Activated CD8-positive, alpha-beta T cell treated with anti-CD3 and anti-CD28 coated beads, Interleukin-2, amount 10 ng/mL, durations not matched to agents 7 days and 5 days (primary cell): ENCODE measurements at regions of chr2 and their contacts with region 1.

Region 1: GRCh38 chr2:178914259-178914849 is 107.1 kb upstream of the TTN start:
- DNase-seq: peak; percentile 86
- ATAC-seq: peak; percentile 78
- H3K4me3 Mint-ChIP-seq: no peak overlapping the region
- H3K27ac Mint-ChIP-seq: peak overlapping the region; percentile 62
- H3K4me1 Mint-ChIP-seq: peaks cover 20% of the 10 kb centered on the region
- H3K27me3 Mint-ChIP-seq: no peaks in the 10 kb centered on the region

Region 2: GRCh38 chr2:178796079-178796677 is 118.2 kb before region 1 on chr2:
- CTCF ChIA-PET with region 1: interaction called, 16 read pairs
- POLR2A ChIA-PET with region 1: no interaction called
- DNase-seq: no peak
- ATAC-seq: no peak
- H3K4me3 Mint-ChIP-seq: no peak overlapping the region
- H3K27ac Mint-ChIP-seq: no peak overlapping the region
- H3K4me1 Mint-ChIP-seq: no peaks in the 10 kb centered on the region
- H3K27me3 Mint-ChIP-seq: no peaks in the 10 kb centered on the region

Region 3: GRCh38 chr2:178829299-178829960 is 84.9 kb before region 1 on chr2:
- CTCF ChIA-PET with region 1: no interaction called
- POLR2A ChIA-PET with region 1: no interaction called
- DNase-seq: no peak
- ATAC-seq: peak; percentile 58
- H3K4me3 Mint-ChIP-seq: no peak overlapping the region
- H3K27ac Mint-ChIP-seq: no peak overlapping the region
- H3K4me1 Mint-ChIP-seq: peaks cover 17% of the 10 kb centered on the region
- H3K27me3 Mint-ChIP-seq: no peaks in the 10 kb centered on the region

Region 4: GRCh38 chr2:178891265-178891958 is 22.9 kb before region 1 on chr2:
- CTCF ChIA-PET with region 1: interaction called, 10 read pairs
- POLR2A ChIA-PET with region 1: no interaction called
- DNase-seq: peak; percentile 81
- ATAC-seq: peak; percentile 85
- H3K4me3 Mint-ChIP-seq: no peak overlapping the region
- H3K27ac Mint-ChIP-seq: no peak overlapping the region
- H3K4me1 Mint-ChIP-seq: peaks cover 7% of the 10 kb centered on the region
- H3K27me3 Mint-ChIP-seq: no peaks in the 10 kb centered on the region

Region 5: GRCh38 chr2:179422037-179422643 is 507.8 kb after region 1 on chr2:
- CTCF ChIA-PET with region 1: no interaction called
- POLR2A ChIA-PET with region 1: no interaction called
- DNase-seq: peak; percentile 60
- ATAC-seq: no peak
- H3K4me3 Mint-ChIP-seq: no peak overlapping the region
- H3K27ac Mint-ChIP-seq: no peak overlapping the region
- H3K4me1 Mint-ChIP-seq: no peaks in the 10 kb centered on the region
- H3K27me3 Mint-ChIP-seq: peaks cover 29% of the 10 kb centered on the region